CD8-positive, alpha-beta T cell (primary cell): ENCODE measurements at regions of chr6 and their contacts with region 1.

Region 1: GRCh38 chr6:90586836-90587638 is at the start of gene MAP3K7:
- DNase-seq: peak; percentile 88 to 97 (median 94)
- ATAC-seq: peak; percentile 86
- H3K4me3 ChIP-seq: peak within 1 kb of the TSS; percentile 79 to 94
- H3K4me3 Mint-ChIP-seq: peak within 1 kb of the TSS; percentile 95
- H3K27ac ChIP-seq: peak within 1 kb of the TSS; percentile 96 to 99
- H3K27ac Mint-ChIP-seq: peak within 1 kb of the TSS; percentile 99
- H3K4me1 ChIP-seq: peaks cover 39% of the 10 kb centered on the region
- H3K4me1 Mint-ChIP-seq: peaks cover 47% of the 10 kb centered on the region
- H3K27me3 ChIP-seq: no peaks in the 10 kb centered on the region
- H3K27me3 Mint-ChIP-seq: peaks cover 6% of the 10 kb centered on the region
- CTCF ChIP-seq: no peak
- total RNA-seq, gene MAP3K7: 9.7 to 10.1 TPM

Region 2: GRCh38 chr6:89352278-89353117 is 1234.5 kb before region 1 on chr6 and contains the start of gene UBE2J1:
- CTCF ChIA-PET with region 1: no interaction called
- POLR2A ChIA-PET with region 1: no interaction called
- intact Hi-C with region 1: loop called (anchors 5 to 10 kb)
- DNase-seq: peak; percentile 48 to 87 (median 71)
- ATAC-seq: peak; percentile 81
- H3K4me3 ChIP-seq: peak within 1 kb of the TSS; percentile 58 to 67
- H3K4me3 Mint-ChIP-seq: peak within 1 kb of the TSS; percentile 97
- H3K27ac ChIP-seq: peak within 1 kb of the TSS; percentile 74 to 77
- H3K27ac Mint-ChIP-seq: peak within 1 kb of the TSS; percentile 97
- H3K4me1 ChIP-seq: peaks cover 42% of the 10 kb centered on the region
- H3K4me1 Mint-ChIP-seq: peaks cover 69% of the 10 kb centered on the region
- H3K27me3 ChIP-seq: no peaks in the 10 kb centered on the region
- H3K27me3 Mint-ChIP-seq: no peaks in the 10 kb centered on the region
- CTCF ChIP-seq: no peak
- total RNA-seq, gene UBE2J1: 34.1 to 37.5 TPM

Region 3: GRCh38 chr6:89412071-89413005 is 1174.7 kb before region 1 on chr6 and contains the start of gene RRAGD:
- CTCF ChIA-PET with region 1: no interaction called
- POLR2A ChIA-PET with region 1: no interaction called
- intact Hi-C with region 1: loop called in 1 of 2 experiments (anchors 10 kb)
- DNase-seq: peak; percentile 11 to 77 (median 52)
- ATAC-seq: peak; percentile 73
- H3K4me3 ChIP-seq: peak within 1 kb of the TSS; percentile 62 to 72
- H3K4me3 Mint-ChIP-seq: peak within 1 kb of the TSS; percentile 94
- H3K27ac ChIP-seq: peak within 1 kb of the TSS in 1 of 2 experiments; percentile 29
- H3K27ac Mint-ChIP-seq: peak within 1 kb of the TSS; percentile 77
- H3K4me1 ChIP-seq: peaks cover 14% of the 10 kb centered on the region
- H3K4me1 Mint-ChIP-seq: peaks cover 20% of the 10 kb centered on the region
- H3K27me3 ChIP-seq: peaks cover 0 to 5% of the 10 kb centered on the region in 2 experiments
- H3K27me3 Mint-ChIP-seq: peaks cover 13% of the 10 kb centered on the region
- CTCF ChIP-seq: no peak
- total RNA-seq, gene RRAGD: 5.6 to 9.3 TPM

Region 4: GRCh38 chr6:89432875-89433251 is 1154.2 kb before region 1 on chr6 and contains the start of gene ANKRD6:
- CTCF ChIA-PET with region 1: no interaction called
- POLR2A ChIA-PET with region 1: no interaction called
- intact Hi-C with region 1: loop called in 1 of 2 experiments (anchors 10 kb)
- DNase-seq: peak; percentile 69 to 92 (median 82)
- ATAC-seq: peak; percentile 96
- H3K4me3 ChIP-seq: peak within 1 kb of the TSS; percentile 42 to 66
- H3K4me3 Mint-ChIP-seq: peak within 1 kb of the TSS; percentile 89
- H3K27ac ChIP-seq: peak within 1 kb of the TSS in 1 of 2 experiments; percentile 28
- H3K27ac Mint-ChIP-seq: peak within 1 kb of the TSS; percentile 82
- H3K4me1 ChIP-seq: peaks cover 7% of the 10 kb centered on the region
- H3K4me1 Mint-ChIP-seq: peaks cover 25% of the 10 kb centered on the region
- H3K27me3 ChIP-seq: no peaks in the 10 kb centered on the region
- H3K27me3 Mint-ChIP-seq: no peaks in the 10 kb centered on the region
- CTCF ChIP-seq: peak; percentile 78
- total RNA-seq, gene ANKRD6: 4.3 to 5.9 TPM

Region 5: DNA sequence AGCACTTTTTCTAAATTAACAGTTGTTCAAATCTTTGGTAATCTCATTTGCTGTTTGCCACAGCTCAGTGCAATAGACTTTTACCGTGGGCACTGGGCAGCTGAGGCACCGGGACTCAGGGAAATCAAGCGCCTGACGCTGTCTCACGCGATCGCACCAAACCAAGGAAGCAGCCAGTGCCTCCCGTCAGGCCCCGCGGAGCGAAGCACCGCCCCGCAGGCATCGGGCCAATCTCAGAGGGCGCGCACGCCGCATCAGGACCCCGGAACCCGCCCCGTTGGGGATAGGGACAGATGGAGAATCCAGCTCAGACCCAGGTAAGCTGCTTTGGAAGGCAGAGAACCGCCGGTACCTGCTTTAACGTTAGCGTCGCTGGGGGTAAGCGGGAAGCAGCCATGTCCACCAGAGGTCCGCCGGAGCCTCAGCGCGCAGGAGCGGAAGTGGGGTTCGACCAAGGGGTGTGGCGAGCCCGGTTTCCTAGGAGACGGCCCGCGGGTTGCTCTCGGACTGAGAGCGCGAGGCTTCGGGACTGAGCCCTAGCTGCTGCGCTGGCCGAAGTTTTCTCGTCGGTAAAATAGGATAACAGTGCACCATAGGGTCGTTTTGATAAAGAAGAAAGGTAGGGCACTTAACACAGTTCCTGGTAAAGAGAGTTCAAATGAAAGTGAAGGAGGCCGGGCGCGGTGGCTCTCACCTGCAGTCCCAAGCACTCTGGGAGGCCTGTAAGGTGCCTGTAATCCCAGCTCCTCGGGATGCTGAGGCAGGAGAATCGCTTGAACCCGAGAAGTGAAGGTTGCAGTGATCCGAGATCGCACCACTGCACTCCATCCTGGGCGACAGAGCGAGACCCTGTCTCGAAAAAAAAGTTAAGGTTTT is 948.5 kb before region 1 on chr6 and contains the start of gene LYRM2:
- CTCF ChIA-PET with region 1: no interaction called
- POLR2A ChIA-PET with region 1: no interaction called
- intact Hi-C with region 1: loop called (anchors 2 kb)
- DNase-seq: peak; percentile 83 to 95 (median 89)
- ATAC-seq: peak; percentile 95
- H3K4me3 ChIP-seq: peak within 1 kb of the TSS; percentile 84 to 90
- H3K4me3 Mint-ChIP-seq: peak within 1 kb of the TSS; percentile 99
- H3K27ac ChIP-seq: peak within 1 kb of the TSS; percentile 91 to 98
- H3K27ac Mint-ChIP-seq: peak within 1 kb of the TSS; percentile 99
- H3K4me1 ChIP-seq: peaks cover 15% of the 10 kb centered on the region
- H3K4me1 Mint-ChIP-seq: peaks cover 34% of the 10 kb centered on the region
- H3K27me3 ChIP-seq: no peaks in the 10 kb centered on the region
- H3K27me3 Mint-ChIP-seq: no peaks in the 10 kb centered on the region
- CTCF ChIP-seq: no peak
- total RNA-seq, gene LYRM2: 16.7 to 17.8 TPM

Region 6: DNA sequence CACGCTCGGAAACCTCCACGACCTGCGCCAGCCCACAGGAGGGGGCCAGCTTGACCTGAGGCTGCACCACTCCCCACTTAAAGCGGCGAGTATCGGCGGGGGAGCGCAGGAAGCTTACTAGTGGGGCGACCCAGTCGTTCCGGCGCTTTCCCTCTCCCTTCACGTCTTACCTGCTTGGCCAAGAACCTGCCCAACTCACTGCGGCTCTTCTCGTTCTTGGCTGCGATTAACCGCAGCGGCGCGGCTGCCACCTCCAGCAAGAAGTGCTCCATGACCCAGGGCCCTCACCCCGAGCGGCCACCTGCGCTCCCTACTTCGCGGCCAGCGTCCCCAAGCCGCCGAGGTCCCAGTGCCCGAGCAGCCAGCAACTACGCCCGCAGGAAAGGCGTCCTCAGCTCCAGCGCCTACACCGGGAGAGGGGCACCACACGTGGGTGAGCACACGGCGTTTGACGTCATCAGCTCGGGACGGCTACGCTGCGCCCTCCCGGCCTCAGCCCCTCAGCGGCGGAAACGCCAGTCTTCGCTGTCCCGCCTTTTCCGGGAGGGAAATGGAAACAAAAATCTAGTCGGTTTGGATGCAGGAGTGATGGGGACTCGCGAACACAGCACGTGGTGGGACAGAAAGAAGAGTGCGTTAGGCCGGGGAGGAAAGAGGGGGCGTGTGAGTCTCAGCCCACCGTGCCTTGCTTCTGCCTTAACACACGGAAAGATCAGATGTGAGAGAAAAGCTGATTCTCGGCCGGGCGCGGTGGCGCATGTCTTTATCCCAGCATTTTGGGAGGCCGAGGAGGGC is 767.5 kb before region 1 on chr6 and contains the start of gene MDN1:
- CTCF ChIA-PET with region 1: no interaction called
- POLR2A ChIA-PET with region 1: no interaction called
- intact Hi-C with region 1: loop called (anchors 2 to 5 kb)
- DNase-seq: peak; percentile 70 to 97 (median 88)
- ATAC-seq: peak; percentile 92
- H3K4me3 ChIP-seq: peak within 1 kb of the TSS; percentile 85 to 90
- H3K4me3 Mint-ChIP-seq: peak within 1 kb of the TSS; percentile 98
- H3K27ac ChIP-seq: peak within 1 kb of the TSS; percentile 73 to 76
- H3K27ac Mint-ChIP-seq: peak within 1 kb of the TSS; percentile 97
- H3K4me1 ChIP-seq: peaks cover 29% of the 10 kb centered on the region
- H3K4me1 Mint-ChIP-seq: peaks cover 34% of the 10 kb centered on the region
- H3K27me3 ChIP-seq: no peaks in the 10 kb centered on the region
- H3K27me3 Mint-ChIP-seq: no peaks in the 10 kb centered on the region
- CTCF ChIP-seq: no peak
- total RNA-seq, gene MDN1: 39.5 to 43.2 TPM

Region 7: GRCh38 chr6:89829591-89830385 is 757.2 kb before region 1 on chr6 and contains the start of gene CASP8AP2:
- CTCF ChIA-PET with region 1: no interaction called
- POLR2A ChIA-PET with region 1: interaction called, 4 read pairs
- intact Hi-C with region 1: loop called (anchors 1 to 2 kb)
- DNase-seq: peak; percentile 88 to 99 (median 93)
- ATAC-seq: peak; percentile 94
- H3K4me3 ChIP-seq: peak within 1 kb of the TSS; percentile 82 to 95
- H3K4me3 Mint-ChIP-seq: peak within 1 kb of the TSS; percentile 99
- H3K27ac ChIP-seq: peak within 1 kb of the TSS; percentile 71 to 84
- H3K27ac Mint-ChIP-seq: peak within 1 kb of the TSS; percentile 97
- H3K4me1 ChIP-seq: peaks cover 14% of the 10 kb centered on the region
- H3K4me1 Mint-ChIP-seq: peaks cover 35% of the 10 kb centered on the region
- H3K27me3 ChIP-seq: no peaks in the 10 kb centered on the region
- H3K27me3 Mint-ChIP-seq: no peaks in the 10 kb centered on the region
- CTCF ChIP-seq: no peak
- total RNA-seq, gene CASP8AP2: 13.1 to 14.8 TPM

Region 8: DNA sequence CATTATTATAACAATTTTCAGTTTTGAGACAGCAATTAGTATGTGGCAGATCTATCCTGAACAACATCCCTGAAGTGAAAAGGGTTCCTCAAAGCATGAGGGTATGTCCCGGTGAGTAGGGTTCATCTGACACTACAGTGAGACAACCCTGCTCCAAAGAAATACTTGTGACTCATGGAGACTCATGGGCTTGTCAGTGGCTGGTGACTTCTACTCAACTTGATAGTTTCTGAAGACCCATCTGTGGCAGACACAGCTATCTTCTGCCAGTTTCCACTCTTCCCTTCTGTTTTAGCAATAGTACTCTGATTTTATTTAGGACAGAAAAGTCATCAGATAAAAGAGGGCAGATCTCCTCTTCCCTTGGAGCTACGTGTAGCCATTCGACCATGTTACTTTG is 41.6 kb before region 1 on chr6:
- CTCF ChIA-PET with region 1: no interaction called
- POLR2A ChIA-PET with region 1: no interaction called
- intact Hi-C with region 1: no loop called
- DNase-seq: no peak
- ATAC-seq: no peak
- H3K4me3 ChIP-seq: no peak overlapping the region
- H3K4me3 Mint-ChIP-seq: no peak overlapping the region
- H3K27ac ChIP-seq: no peak overlapping the region
- H3K27ac Mint-ChIP-seq: no peak overlapping the region
- H3K4me1 ChIP-seq: no peaks in the 10 kb centered on the region
- H3K4me1 Mint-ChIP-seq: no peaks in the 10 kb centered on the region
- H3K27me3 ChIP-seq: no peaks in the 10 kb centered on the region
- H3K27me3 Mint-ChIP-seq: no peaks in the 10 kb centered on the region
- CTCF ChIP-seq: no peak